ENCODE measurements at regions of chr19 and their contacts with region 1.

Region 1: DNA sequence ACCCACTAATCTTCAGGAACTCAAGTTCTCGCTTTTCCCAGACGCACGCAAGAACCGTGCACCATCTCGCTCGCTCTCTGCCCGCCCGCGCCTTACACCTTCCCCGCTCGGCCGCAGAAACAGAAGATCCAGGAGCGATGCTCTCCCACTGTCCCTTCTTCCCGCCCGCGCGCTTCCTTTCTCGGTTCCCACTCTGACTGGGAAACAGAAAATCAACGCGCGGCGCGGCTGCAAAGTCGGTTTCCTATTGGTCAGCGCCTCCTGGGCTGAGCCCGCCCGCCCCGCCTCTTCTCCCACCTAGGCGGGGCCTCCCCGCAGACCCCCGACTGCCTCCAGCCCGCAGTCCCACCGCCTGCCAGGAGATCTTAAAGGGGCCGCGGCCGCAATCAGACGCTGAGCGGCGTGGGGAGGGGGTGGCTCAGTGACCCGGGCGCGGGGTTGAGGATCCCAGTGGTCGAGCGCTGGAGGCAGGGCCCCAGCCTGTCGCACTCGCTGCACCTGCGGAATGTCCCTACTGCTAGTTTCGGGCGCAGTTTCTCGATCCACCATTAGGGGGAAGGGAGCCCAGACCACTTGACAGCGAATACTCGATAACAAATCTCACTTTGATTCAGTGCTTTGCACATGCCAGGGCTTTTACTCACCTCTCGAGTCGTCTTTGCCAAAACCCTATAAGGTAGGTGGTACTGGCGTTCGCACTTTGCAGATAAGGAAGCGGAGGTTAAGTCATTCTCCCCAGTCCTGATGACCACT is 685 bp upstream of the SLC25A23 start:
- DNase-seq: peak; percentile 99
- H3K4me3 Mint-ChIP-seq: peak overlapping the region; percentile 93
- H3K27ac Mint-ChIP-seq: peak overlapping the region; percentile 84
- H3K4me1 Mint-ChIP-seq: peaks cover 17% of the 10 kb centered on the region
- H3K27me3 Mint-ChIP-seq: no peaks in the 10 kb centered on the region

Region 2: DNA sequence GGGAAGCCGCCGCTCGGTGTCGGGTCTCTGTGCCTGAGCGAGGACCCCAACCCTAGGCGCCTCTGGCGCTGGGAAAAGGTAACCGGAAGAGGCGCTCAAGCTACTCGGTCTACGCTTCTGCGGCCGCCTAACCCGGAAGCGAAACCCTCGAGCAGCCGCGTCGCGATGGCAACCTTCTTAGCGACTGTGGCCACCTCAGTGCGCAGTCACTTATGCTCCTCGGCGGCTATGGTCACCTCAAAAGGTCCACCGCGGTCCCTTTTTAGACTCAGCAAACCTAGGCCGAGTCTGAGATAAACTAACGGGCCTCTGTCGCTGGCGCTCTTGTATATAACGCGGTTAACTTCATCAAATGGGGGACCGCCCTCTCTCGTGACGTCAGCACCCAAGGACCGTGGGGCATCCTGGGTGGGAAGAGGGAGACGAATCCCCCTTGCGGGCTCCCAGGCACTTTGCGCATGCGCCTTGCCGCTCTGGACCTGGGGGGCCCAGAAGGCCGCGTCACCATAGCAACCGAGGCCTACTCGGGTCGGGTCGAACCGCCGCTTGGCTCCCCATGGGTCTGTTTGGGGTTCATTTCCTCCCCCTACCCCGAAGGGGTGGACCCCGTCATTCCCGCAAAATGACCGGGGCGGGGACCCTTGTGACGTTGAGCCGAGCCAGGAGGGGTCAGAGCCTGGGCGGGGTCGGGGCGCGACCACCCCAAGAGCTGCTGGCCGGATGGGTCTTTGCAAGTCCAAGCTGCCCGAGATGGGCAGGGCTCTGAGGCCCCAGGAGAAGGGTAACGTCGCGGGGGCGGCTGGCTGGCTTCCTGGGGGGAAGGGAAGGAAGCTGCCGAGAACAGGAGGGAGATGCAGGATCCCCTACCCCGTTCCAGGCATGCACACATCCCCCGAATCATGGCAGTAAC is 66.9 kb before region 1 on chr19 and contains the start of gene GTF2F1:
- intact Hi-C with region 1: loop called (anchors 2 kb)
- DNase-seq: peak; percentile 97
- H3K4me3 Mint-ChIP-seq: peak within 1 kb of the TSS; percentile 90
- H3K27ac Mint-ChIP-seq: peak within 1 kb of the TSS; percentile 95
- H3K4me1 Mint-ChIP-seq: peaks cover 18% of the 10 kb centered on the region
- H3K27me3 Mint-ChIP-seq: no peaks in the 10 kb centered on the region
- total RNA-seq, gene GTF2F1: 60.7 and 63.5 TPM in 2 replicates

Region 3: DNA sequence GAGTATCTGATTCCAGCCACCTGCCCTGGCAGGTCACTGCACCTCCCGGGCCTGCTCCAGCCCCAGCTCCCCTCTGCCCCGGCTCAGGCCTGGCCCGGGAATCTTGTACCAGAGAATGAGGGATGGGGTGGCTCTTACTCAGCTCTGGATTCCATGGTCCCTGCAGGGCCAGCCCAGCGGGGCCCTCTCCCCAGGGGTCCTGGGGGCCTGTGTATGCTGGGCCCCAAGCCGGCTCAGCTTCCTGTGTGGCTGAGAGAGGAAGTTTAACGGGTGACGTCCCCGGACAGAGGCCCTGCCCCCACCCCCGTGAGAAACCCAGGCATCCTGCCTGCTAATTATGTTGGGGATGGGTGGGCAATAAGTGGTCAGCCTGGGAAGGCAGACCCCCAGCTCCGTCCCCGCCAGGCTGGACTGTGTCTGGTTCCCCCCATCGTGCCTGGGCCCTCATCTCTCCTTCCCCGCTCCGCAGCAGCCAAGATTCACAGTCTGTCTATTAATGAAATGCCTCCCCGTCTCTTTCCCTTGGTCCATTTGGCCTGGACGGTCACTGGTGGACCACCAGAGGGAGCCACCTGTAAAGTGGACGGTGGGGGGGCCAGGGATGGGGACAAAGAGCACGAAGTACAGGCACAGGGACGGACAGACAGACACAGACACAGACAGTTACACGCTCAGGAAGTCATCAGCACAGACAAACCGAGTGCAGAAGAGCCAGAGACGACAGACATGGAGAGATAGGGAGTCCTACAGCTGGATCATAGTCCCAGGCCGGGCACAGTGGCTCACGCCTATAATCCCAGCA is 21.5 kb after region 1 on chr19 and contains the start of gene DENND1C:
- intact Hi-C with region 1: loop called (anchors 1 kb)
- DNase-seq: peak; percentile 91
- H3K4me3 Mint-ChIP-seq: peak within 1 kb of the TSS; percentile 99
- H3K27ac Mint-ChIP-seq: peak within 1 kb of the TSS; percentile 96
- H3K4me1 Mint-ChIP-seq: peaks cover 23% of the 10 kb centered on the region
- H3K27me3 Mint-ChIP-seq: no peaks in the 10 kb centered on the region
- total RNA-seq, gene DENND1C: 63.7 and 67.6 TPM in 2 replicates

Region 4: GRCh38 chr19:6501740-6502648 is 41.7 kb after region 1 on chr19 and contains the start of gene TUBB4A:
- intact Hi-C with region 1: loop called (anchors 2 kb)
- DNase-seq: peak; percentile 85
- H3K4me3 Mint-ChIP-seq: peak within 1 kb of the TSS; percentile 83
- H3K27ac Mint-ChIP-seq: peak within 1 kb of the TSS; percentile 65
- H3K4me1 Mint-ChIP-seq: peaks cover 21% of the 10 kb centered on the region
- H3K27me3 Mint-ChIP-seq: peaks cover 22% of the 10 kb centered on the region
- total RNA-seq, gene TUBB4A: 2.8 and 3.3 TPM in 2 replicates

Region 5: GRCh38 chr19:6564393-6564792 is 104.1 kb after region 1 on chr19:
- intact Hi-C with region 1: no loop called
- DNase-seq: peak; percentile 73
- H3K4me3 Mint-ChIP-seq: no peak overlapping the region
- H3K27ac Mint-ChIP-seq: no peak overlapping the region
- H3K4me1 Mint-ChIP-seq: no peaks in the 10 kb centered on the region
- H3K27me3 Mint-ChIP-seq: peaks cover 30% of the 10 kb centered on the region